ENCODE measurements at regions of chr2 and their contacts with region 1.

Region 1: GRCh38 chr2:38274286-38275276 is 102.5 kb downstream of the ATL2 start:
- DNase-seq: no peak
- ATAC-seq: peak; percentile 95
- H3K4me3 ChIP-seq: no peak overlapping the region
- H3K27ac ChIP-seq: no peak overlapping the region
- H3K4me1 ChIP-seq: no peaks in the 10 kb centered on the region
- H3K27me3 ChIP-seq: no peaks in the 10 kb centered on the region
- CTCF ChIP-seq: peak; percentile 64

Region 2: GRCh38 chr2:37982147-37982582 is 292.4 kb before region 1 on chr2:
- intact Hi-C with region 1: loop called (anchors 10 kb)
- DNase-seq: no peak
- ATAC-seq: peak; percentile 80
- H3K4me3 ChIP-seq: peak overlapping the region; percentile 24
- H3K27ac ChIP-seq: no peak overlapping the region
- H3K4me1 ChIP-seq: peaks cover 7% of the 10 kb centered on the region
- H3K27me3 ChIP-seq: no peaks in the 10 kb centered on the region
- CTCF ChIP-seq: peak; percentile 85

Measured in upper lobe of right lung (tissue), 1 donor.